ENCODE measurements at regions of chr2 and their contacts with region 1.

Region 1: DNA sequence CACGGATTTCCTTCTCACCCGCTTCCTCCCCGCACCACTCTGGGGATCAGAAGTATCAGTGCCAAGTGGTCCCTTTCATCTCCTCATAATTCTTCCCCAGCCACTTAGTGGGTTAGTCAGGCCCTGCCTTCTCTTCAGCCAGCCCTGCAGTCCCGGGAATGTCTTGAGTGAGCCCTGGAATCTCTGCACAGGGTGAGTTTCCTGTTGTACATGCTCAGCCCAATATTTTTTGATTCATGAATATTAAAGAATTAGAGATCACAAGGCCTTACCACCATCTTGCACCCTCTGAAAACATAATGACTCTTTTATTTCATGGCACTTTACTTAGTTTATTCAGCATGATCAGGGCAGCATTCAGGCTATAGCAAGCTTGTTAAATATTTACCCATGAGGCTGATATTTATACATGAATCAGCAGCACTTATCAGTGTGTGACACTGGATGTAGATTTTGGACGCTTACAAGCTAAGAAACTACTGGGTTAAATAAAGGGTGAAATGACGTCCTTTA is 159.4 kb upstream of the FOSL2 start:
- DNase-seq: peak; percentile 43
- H3K4me3 Mint-ChIP-seq: peak overlapping the region; percentile 61
- H3K27ac Mint-ChIP-seq: peak overlapping the region; percentile 90
- H3K4me1 Mint-ChIP-seq: peaks cover 30% of the 10 kb centered on the region
- H3K27me3 Mint-ChIP-seq: no peaks in the 10 kb centered on the region
- CTCF ChIP-seq: no peak

Region 2: DNA sequence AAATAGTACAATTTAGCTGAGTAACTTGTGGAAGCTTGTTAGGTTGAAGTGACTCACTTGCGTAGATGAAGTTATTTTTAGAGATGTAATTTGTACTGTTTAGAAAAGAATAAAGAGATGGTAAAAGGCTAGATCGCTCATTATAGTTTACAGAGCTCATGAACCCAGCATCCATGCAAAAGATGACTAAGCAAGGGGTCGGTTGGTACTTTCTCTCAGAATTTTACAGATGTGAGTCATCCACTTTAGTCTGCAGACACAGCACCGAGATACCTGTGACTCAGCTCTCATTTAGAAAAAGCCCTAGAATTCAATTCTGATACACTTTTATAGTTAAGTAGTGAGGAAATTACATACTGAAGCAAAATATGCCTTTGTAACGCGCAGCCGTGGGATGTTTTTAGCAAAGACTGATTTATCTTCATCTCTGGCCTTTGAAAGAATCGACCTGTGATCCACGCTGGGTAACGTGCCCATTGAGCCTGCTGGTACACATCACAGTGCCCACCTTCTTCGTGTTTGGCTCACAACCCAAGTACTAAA is 42.9 kb after region 1 on chr2:
- CTCF ChIA-PET with region 1: no interaction called
- intact Hi-C with region 1: loop called (anchors 5 kb)
- DNase-seq: peak; percentile 33
- H3K4me3 Mint-ChIP-seq: no peak overlapping the region
- H3K27ac Mint-ChIP-seq: peak overlapping the region; percentile 37
- H3K4me1 Mint-ChIP-seq: peaks cover 76% of the 10 kb centered on the region
- H3K27me3 Mint-ChIP-seq: no peaks in the 10 kb centered on the region
- CTCF ChIP-seq: no peak